Endothelial cell of umbilical vein (primary cell): ENCODE measurements at regions of chr4 and their contacts with region 1.

Region 1: GRCh38 chr4:7781366-7781765 is 158.3 kb downstream of the AFAP1 start:
- DNase-seq: peak; percentile 78
- H3K4me3 ChIP-seq: no peak overlapping the region
- H3K27ac ChIP-seq: peak overlapping the region; percentile 93
- H3K4me1 ChIP-seq: peaks cover 62% of the 10 kb centered on the region
- H3K27me3 ChIP-seq: no peaks in the 10 kb centered on the region
- CTCF ChIP-seq: no peak
- POLR2A ChIP-seq: no peak

Region 2: DNA sequence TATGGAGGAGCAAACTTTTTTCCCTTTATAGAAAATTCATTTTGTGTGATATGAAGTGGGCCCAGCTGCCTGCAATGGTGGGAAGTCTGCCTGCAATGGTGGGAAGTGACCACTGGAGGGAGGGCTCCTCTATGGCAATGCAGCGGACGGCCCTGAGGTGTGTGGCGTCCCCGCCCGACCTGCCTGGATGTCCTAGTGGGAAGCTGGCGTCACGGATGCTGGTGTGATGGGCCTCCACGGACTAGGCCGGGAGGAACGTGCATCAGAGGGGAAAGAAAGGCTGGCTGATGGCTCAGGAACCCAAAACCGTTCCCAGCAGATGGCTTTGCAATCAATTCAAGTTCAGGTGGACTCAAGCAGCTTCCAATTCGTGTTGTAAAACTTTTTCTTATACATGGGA is 19.6 kb before region 1 on chr4:
- CTCF ChIA-PET with region 1: interaction called, 13 read pairs
- POLR2A ChIA-PET with region 1: no interaction called
- dilution Hi-C with region 1: no loop called
- intact Hi-C with region 1: no loop called
- DNase-seq: peak; percentile 61
- H3K4me3 ChIP-seq: no peak overlapping the region
- H3K27ac ChIP-seq: no peak overlapping the region
- H3K4me1 ChIP-seq: peaks cover 9% of the 10 kb centered on the region
- H3K27me3 ChIP-seq: no peaks in the 10 kb centered on the region
- CTCF ChIP-seq: peak; percentile 70 to 82
- POLR2A ChIP-seq: no peak

Region 3: GRCh38 chr4:7792616-7793015 is 11.2 kb after region 1 on chr4:
- CTCF ChIA-PET with region 1: interaction called, 5 read pairs
- POLR2A ChIA-PET with region 1: no interaction called
- dilution Hi-C with region 1: no loop called
- intact Hi-C with region 1: loop called (anchors 1 kb)
- DNase-seq: peak; percentile 69
- H3K4me3 ChIP-seq: no peak overlapping the region
- H3K27ac ChIP-seq: peak overlapping the region; percentile 32
- H3K4me1 ChIP-seq: peaks cover 16% of the 10 kb centered on the region
- H3K27me3 ChIP-seq: no peaks in the 10 kb centered on the region
- CTCF ChIP-seq: no peak
- POLR2A ChIP-seq: peak; percentile 27

Region 4: DNA sequence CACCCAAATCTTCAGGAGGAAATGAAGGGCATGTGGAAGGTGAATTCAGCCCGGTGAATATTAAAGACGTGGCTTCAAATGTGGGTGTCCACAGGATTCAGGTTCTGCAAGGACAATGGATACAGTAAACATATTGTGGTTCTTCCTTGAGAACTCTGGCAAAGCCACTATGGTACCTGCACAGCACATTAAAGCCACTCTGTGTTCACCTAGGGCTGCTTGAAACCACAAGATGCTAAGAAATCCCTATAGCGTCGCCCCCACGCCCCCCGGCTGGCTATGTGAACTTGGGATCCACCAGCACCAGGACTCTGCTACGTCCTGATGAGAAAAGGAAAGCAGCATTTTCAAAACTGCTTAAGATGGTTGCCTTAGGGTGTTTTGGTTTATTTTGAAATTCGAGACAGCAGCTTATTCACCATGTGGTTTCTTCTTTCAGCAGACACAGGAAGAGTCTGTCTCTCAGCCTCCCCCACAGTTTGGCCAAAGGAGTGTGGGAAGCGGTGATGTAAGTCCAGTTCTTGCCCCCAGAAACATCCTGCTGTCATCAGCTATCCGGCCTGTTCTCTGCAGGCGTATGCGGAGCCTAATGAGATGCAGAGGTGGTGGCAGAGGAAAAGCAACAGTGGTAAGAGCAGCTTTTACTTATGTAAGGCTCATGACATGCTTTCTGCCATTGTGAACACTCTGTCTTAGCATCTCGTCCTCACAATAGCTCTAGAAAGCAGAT is 46.8 kb after region 1 on chr4:
- CTCF ChIA-PET with region 1: interaction called, 3 read pairs
- POLR2A ChIA-PET with region 1: no interaction called
- dilution Hi-C with region 1: no loop called
- intact Hi-C with region 1: loop called (anchors 1 kb)
- DNase-seq: peak; percentile 96
- H3K4me3 ChIP-seq: no peak overlapping the region
- H3K27ac ChIP-seq: peak overlapping the region; percentile 88
- H3K4me1 ChIP-seq: peaks cover 74% of the 10 kb centered on the region
- H3K27me3 ChIP-seq: no peaks in the 10 kb centered on the region
- CTCF ChIP-seq: no peak
- POLR2A ChIP-seq: no peak